Right ventricle myocardium superior (tissue), 1 donor: ENCODE measurements at regions of chr4 and their contacts with region 1.

Region 1: GRCh38 chr4:139209470-139210063 is 32.5 kb upstream of the ELF2 start:
- DNase-seq: no peak
- ATAC-seq: no peak

Region 2: GRCh38 chr4:139243448-139244365 is 34.1 kb after region 1 on chr4:
- intact Hi-C with region 1: loop called (anchors 2 kb)
- DNase-seq: no peak
- ATAC-seq: peak; percentile 41